HEK293T (cell line): ENCODE measurements at regions of chr2 and their contacts with region 1.

Region 1: GRCh38 chr2:173210270-173211196 is 134.9 kb downstream of the MAP3K20 start:
- DNase-seq: peak; percentile 75

Region 2: DNA sequence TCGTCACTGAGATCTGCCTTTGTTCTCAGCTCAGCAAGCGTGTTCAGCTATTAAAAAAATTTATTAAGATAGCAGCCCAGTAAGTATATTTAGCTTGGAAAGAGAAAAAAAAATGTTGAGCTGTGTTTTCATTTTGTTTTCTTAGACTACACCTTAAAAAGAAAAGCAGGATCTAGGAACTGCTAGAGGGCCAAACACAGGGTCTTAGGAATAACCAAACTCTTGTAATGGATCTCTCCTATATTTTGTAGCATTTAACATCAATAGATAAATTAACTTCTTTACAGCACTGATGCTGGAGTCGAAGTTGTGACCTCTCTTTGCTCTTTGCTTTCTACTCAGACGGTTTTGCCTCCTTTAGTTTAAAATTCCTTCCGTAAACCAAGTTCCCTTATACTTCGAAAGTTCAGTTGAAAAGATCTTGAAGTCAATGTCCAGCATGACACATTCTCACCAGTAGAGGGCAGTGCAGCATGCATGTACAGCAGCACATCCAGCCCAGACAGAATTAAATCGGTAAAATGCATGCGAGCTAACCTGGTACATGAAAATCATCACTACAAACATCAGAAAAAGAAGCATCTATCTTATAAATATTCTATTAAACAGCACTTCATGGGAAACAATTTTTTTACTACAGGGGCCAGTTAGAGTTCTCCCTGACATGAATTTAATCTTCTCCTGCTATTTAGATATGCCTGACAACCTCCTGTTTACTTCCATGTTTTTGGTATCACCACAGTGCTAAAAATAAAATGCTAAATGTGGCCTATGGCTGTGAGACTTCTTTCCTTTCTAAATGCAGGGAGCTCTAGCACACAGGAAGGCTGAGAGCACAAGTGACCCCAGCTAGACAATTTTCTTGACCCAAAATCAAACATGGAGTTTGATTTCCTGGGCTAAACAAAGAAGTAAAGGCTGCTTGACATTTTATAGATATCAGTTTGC is 183.1 kb before region 1 on chr2:
- CTCF ChIA-PET with region 1: interaction called, 59 read pairs
- POLR2A ChIA-PET with region 1: no interaction called
- DNase-seq: peak; percentile 68

Region 3: DNA sequence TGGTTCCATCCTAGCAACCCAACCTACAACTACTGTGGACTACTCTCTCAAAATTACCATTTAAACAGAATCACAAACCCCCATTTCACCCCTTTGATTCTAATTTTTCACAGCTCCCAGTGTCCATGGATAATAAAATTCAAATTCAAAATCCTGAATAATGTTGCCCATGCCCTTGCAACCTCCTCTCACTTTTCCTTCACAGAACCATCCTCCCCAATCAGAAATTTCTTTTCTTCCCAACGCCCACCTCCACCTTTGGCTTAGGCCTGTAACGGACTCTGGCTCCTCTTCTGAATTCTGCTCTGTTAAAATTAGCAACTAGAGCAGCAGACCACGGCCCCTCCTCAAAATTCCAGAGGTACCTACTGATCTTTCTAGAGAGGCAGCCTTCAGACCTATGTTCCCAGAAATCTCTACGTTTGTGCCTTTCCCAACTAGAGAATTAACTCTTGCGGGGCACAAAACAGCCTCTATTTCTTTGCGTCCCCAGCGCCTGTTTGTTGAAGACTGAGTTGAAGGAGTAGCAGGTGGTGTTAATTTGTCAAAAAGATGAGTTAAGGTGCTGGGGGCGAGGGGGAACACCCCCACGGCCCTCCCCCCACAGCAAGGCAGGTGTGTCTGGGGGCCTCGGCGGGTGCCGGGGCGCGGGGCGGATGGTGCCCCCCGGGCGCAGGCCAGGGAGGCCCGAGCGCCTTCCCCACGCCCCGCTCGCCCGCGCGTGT is 135.3 kb before region 1 on chr2:
- CTCF ChIA-PET with region 1: interaction called, 10 read pairs
- POLR2A ChIA-PET with region 1: no interaction called
- DNase-seq: no peak